ENCODE measurements at regions of chr20 and their contacts with region 1.

Region 1: DNA sequence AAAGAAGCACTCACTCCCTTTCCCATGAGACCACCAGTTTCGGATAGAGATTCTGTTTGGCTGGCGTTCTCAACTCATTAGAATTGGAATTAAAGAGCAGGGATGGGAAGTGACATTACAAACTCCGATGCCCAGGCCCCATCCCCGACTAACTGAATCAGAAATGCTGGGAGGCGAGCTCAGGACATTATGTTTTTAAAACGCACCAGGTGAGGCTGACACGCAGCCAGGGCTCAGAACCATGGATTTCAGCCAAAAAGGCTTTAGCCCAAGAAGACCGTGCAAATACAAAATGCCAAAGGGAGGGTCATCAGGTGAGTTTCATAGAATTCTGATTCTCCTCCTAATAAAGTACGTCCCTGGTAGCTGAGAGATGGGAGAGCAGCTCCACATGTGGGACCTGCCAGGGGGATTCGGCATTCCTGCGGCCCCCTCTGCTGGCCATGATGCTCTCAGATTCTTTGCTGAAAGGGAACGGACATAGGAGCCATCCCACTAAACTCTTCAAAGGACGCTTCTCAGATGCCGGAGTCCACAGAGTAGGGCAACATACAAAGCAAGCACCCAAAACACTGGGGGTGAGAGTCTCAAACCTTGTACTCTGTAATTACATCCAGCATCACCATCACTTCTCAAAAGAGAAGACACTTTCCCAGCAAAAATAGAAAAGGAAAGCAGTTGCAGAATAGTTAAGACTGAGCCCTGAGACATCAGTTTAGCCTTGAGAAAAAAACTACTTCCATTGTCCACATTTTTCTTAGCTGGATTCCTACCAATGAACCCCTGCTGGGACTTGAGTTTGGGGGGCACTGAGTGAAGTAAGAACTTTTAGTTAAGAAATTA is 205.2 kb downstream of the BMP7 start:
- DNase-seq: peak; percentile 80
- ATAC-seq: peak; percentile 94
- H3K4me3 Mint-ChIP-seq: no peak overlapping the region
- H3K27ac Mint-ChIP-seq: no peak overlapping the region
- H3K4me1 Mint-ChIP-seq: peaks cover 9% of the 10 kb centered on the region
- H3K27me3 Mint-ChIP-seq: no peaks in the 10 kb centered on the region; the same call in 1 of the 2 replicates
- CTCF ChIP-seq: peak; percentile 22; the same call in 1 of the 2 replicates

Region 2: DNA sequence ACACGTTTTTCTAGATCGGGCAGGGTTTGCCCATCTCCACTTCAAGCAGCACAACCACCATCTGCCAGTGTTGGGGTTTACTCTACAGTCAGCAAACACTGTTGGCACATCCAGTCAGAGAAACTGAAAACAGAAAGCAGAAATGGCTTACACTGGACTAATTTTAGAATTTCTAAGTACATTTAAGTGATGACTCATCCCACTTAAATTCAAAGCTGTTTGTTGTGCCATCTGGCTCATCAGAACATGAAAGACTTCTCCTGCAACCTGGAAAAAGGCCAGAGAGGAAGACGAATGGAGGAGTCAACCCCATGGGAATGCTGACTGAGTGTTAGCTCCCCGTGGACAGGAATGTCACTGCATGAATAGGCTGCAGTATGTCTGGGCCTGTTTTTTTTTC is 506.4 kb before region 1 on chr20:
- CTCF ChIA-PET with region 1: interaction called, 28 read pairs
- POLR2A ChIA-PET with region 1: no interaction called
- DNase-seq: no peak
- ATAC-seq: peak; percentile 73
- H3K4me3 Mint-ChIP-seq: no peak overlapping the region
- H3K27ac Mint-ChIP-seq: peak overlapping the region; percentile 9; the same call in 1 of the 2 replicates
- H3K4me1 Mint-ChIP-seq: peaks cover 8% of the 10 kb centered on the region
- H3K27me3 Mint-ChIP-seq: no peaks in the 10 kb centered on the region
- CTCF ChIP-seq: no peak

Region 3: DNA sequence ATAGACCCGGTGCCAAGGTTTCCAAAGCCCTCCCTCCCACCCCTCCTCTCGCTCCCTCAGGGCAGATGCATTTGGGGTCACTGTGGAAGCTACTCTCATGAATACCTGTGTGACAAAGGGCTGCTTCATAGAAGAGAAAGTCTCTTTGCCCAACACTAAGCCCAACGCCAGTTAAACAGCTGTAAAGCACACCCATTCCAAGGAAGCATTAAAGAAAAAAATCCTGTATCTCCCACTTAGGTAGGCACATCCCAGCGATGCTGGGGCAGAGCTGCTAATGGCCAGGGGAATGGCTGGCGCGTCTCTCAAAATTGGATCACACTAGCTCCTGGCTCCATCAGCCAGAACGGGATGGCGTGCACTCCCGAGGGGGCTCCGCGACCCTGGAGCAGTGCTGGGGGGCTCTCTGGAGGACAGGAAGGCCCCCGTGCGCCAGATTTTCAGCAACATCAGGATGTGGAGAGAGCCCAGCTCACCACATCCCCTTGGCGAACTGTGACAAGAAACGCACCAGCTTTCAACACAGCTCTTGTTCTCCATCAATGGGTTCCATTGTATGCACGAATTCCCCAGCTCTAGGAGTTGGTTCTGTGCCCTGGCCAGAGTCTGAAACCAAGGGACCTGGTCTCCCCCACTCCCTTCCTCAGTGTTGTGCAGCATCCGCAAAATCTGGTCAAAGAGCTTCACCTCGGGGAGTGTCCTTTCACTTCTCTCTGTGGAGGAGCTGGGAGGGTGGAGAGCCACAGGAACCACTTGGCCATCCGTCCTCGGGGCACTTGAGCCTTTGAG is 358.2 kb before region 1 on chr20:
- CTCF ChIA-PET with region 1: no interaction called
- POLR2A ChIA-PET with region 1: no interaction called
- DNase-seq: no peak
- ATAC-seq: no peak
- H3K4me3 Mint-ChIP-seq: no peak overlapping the region
- H3K27ac Mint-ChIP-seq: no peak overlapping the region
- H3K4me1 Mint-ChIP-seq: peaks cover 16% of the 10 kb centered on the region
- H3K27me3 Mint-ChIP-seq: peaks cover 6% of the 10 kb centered on the region; the same call in 1 of the 2 replicates
- CTCF ChIP-seq: no peak

Region 4: GRCh38 chr20:57013718-57014117 is 47.6 kb before region 1 on chr20:
- CTCF ChIA-PET with region 1: interaction called, 15 read pairs
- POLR2A ChIA-PET with region 1: no interaction called
- DNase-seq: peak; percentile 77
- ATAC-seq: peak; percentile 99
- H3K4me3 Mint-ChIP-seq: peak overlapping the region; percentile 55
- H3K27ac Mint-ChIP-seq: no peak overlapping the region
- H3K4me1 Mint-ChIP-seq: peaks cover 23% of the 10 kb centered on the region
- H3K27me3 Mint-ChIP-seq: peaks cover 37% of the 10 kb centered on the region
- CTCF ChIP-seq: no peak

Region 5: GRCh38 chr20:57022312-57022711 is 39.0 kb before region 1 on chr20:
- CTCF ChIA-PET with region 1: interaction called, 18 read pairs
- POLR2A ChIA-PET with region 1: no interaction called
- DNase-seq: peak; percentile 74
- ATAC-seq: peak; percentile 99
- H3K4me3 Mint-ChIP-seq: no peak overlapping the region
- H3K27ac Mint-ChIP-seq: no peak overlapping the region
- H3K4me1 Mint-ChIP-seq: peaks cover 33% of the 10 kb centered on the region
- H3K27me3 Mint-ChIP-seq: peaks cover 8% of the 10 kb centered on the region; the same call in 1 of the 2 replicates
- CTCF ChIP-seq: no peak; the same call in 1 of the 2 replicates

Region 6: GRCh38 chr20:57027777-57028176 is 33.5 kb before region 1 on chr20:
- CTCF ChIA-PET with region 1: interaction called, 18 read pairs
- POLR2A ChIA-PET with region 1: no interaction called
- DNase-seq: no peak
- ATAC-seq: no peak
- H3K4me3 Mint-ChIP-seq: no peak overlapping the region
- H3K27ac Mint-ChIP-seq: no peak overlapping the region
- H3K4me1 Mint-ChIP-seq: peaks cover 34% of the 10 kb centered on the region
- H3K27me3 Mint-ChIP-seq: no peaks in the 10 kb centered on the region
- CTCF ChIP-seq: no peak

Region 7: DNA sequence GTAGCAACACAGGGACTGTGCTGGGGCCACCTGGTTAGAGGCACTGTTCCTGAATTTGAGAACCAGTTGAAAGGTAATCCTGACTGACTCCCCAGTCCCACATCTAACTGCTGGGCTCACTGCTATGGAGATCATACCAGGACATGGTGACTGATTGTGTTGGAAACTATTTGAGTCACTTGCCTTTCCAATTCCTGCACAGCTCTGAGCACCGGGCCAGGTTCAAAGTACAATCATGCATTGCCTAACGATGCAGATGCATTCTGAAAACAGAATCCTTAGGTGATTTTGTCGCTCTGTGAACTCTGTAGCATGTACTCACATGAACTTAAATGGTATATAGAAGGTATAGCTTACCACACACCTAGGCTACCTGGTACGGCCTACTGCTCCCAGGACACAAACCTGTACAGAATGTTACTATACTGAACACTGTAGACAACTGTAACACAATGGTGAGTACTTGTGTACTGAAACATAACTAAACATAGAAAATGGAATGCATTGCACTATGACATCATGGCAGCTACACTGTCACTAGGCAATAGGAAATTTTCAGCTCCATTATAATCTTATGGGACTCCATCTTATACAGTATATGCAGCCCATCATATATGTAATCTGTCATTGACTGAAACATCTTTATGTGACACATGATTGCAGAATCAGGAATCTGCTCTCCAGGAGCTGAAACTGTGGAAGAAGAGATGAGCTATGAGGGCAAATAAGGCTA is 10.0 kb before region 1 on chr20:
- CTCF ChIA-PET with region 1: interaction called, 11 read pairs
- POLR2A ChIA-PET with region 1: no interaction called
- DNase-seq: no peak
- ATAC-seq: no peak
- H3K4me3 Mint-ChIP-seq: no peak overlapping the region
- H3K27ac Mint-ChIP-seq: no peak overlapping the region
- H3K4me1 Mint-ChIP-seq: peaks cover 7% of the 10 kb centered on the region; the same call in 1 of the 2 replicates
- H3K27me3 Mint-ChIP-seq: no peaks in the 10 kb centered on the region
- CTCF ChIP-seq: no peak

Region 8: GRCh38 chr20:57071283-57071770 is 10.0 kb after region 1 on chr20:
- CTCF ChIA-PET with region 1: interaction called, 41 read pairs
- POLR2A ChIA-PET with region 1: no interaction called
- DNase-seq: peak; percentile 57
- ATAC-seq: peak; percentile 83
- H3K4me3 Mint-ChIP-seq: peak overlapping the region; percentile 77
- H3K27ac Mint-ChIP-seq: peak overlapping the region; percentile 92
- H3K4me1 Mint-ChIP-seq: peaks cover 45% of the 10 kb centered on the region
- H3K27me3 Mint-ChIP-seq: peaks cover 55% of the 10 kb centered on the region
- CTCF ChIP-seq: no peak

Region 9: GRCh38 chr20:57114290-57115005 is 53.2 kb after region 1 on chr20:
- CTCF ChIA-PET with region 1: no interaction called
- POLR2A ChIA-PET with region 1: no interaction called
- DNase-seq: no peak
- ATAC-seq: no peak
- H3K4me3 Mint-ChIP-seq: no peak overlapping the region
- H3K27ac Mint-ChIP-seq: no peak overlapping the region
- H3K4me1 Mint-ChIP-seq: peaks cover 5% of the 10 kb centered on the region; the same call in 1 of the 2 replicates
- H3K27me3 Mint-ChIP-seq: no peaks in the 10 kb centered on the region
- CTCF ChIP-seq: no peak

Region 10: DNA sequence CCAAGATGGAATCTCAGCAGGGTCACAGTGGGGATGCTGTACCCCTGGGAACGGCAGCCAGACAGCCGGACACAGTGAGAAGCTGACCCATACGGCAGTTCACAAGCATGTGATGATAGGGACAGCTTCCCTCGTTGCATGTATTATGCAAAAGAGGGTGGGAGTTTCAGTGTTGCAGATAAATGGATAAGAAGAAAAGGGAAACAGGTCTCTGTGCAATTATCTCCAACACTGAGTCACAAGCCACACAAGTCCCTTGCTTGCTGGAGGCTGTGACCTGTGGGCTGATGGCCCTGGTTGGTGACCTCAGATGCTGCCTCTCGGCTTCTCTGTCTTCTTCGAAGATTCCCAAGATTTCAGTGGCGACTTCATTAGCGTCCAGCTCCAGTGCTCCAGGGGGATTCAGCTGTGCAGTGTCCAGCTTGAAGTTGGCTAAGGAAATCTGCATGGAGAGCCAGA is 247.6 kb after region 1 on chr20:
- CTCF ChIA-PET with region 1: no interaction called
- POLR2A ChIA-PET with region 1: no interaction called
- DNase-seq: no peak
- ATAC-seq: no peak
- H3K4me3 Mint-ChIP-seq: no peak overlapping the region
- H3K27ac Mint-ChIP-seq: no peak overlapping the region
- H3K4me1 Mint-ChIP-seq: no peaks in the 10 kb centered on the region
- H3K27me3 Mint-ChIP-seq: no peaks in the 10 kb centered on the region; the same call in 1 of the 2 replicates
- CTCF ChIP-seq: no peak

Region 11: DNA sequence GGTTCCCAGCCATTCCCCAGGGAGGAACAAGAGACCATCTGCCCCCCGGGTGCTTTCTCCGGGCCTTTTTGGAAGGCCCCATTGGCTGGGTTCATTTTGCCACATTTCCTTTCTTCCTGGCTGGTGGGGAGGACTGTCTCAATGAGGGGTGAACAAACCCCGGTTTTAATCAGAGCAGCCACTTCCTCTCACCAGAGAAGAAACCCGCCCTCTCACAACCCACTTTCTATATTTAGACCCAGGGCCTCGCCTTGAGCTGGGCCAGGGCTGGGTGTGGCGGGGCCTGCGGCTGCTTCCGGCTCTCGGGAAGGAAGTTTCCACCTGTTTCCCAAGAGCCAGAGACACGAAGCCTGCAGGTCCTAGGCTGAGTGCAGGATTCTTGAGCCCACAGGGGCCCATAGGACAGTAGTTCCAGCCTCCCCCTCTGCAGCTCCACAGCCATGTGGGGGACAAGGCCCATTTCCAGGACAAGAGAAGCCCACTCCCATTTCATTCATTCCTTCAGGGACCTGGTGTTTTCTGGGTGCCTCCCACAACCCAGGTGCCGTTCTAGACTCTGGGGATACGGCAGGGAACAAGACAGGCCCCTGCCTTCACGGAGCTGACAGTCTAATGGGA is 371.7 kb after region 1 on chr20:
- CTCF ChIA-PET with region 1: no interaction called
- POLR2A ChIA-PET with region 1: no interaction called
- DNase-seq: no peak
- ATAC-seq: no peak
- H3K4me3 Mint-ChIP-seq: no peak overlapping the region
- H3K27ac Mint-ChIP-seq: no peak overlapping the region
- H3K4me1 Mint-ChIP-seq: peaks cover 7% of the 10 kb centered on the region
- H3K27me3 Mint-ChIP-seq: peaks cover 2% of the 10 kb centered on the region; the same call in 1 of the 2 replicates
- CTCF ChIP-seq: no peak